Calu3 (cell line): ENCODE measurements at regions of chr6 and their contacts with region 1.

Region 1: GRCh38 chr6:168132531-168133167 is 53.6 kb upstream of the FRMD1 start:
- DNase-seq: peak; percentile 67
- H3K4me3 Mint-ChIP-seq: no peak overlapping the region
- H3K27ac Mint-ChIP-seq: no peak overlapping the region
- H3K4me1 Mint-ChIP-seq: no peaks in the 10 kb centered on the region
- H3K27me3 Mint-ChIP-seq: peaks cover 84% of the 10 kb centered on the region
- CTCF ChIP-seq: peak; percentile 42

Region 2: DNA sequence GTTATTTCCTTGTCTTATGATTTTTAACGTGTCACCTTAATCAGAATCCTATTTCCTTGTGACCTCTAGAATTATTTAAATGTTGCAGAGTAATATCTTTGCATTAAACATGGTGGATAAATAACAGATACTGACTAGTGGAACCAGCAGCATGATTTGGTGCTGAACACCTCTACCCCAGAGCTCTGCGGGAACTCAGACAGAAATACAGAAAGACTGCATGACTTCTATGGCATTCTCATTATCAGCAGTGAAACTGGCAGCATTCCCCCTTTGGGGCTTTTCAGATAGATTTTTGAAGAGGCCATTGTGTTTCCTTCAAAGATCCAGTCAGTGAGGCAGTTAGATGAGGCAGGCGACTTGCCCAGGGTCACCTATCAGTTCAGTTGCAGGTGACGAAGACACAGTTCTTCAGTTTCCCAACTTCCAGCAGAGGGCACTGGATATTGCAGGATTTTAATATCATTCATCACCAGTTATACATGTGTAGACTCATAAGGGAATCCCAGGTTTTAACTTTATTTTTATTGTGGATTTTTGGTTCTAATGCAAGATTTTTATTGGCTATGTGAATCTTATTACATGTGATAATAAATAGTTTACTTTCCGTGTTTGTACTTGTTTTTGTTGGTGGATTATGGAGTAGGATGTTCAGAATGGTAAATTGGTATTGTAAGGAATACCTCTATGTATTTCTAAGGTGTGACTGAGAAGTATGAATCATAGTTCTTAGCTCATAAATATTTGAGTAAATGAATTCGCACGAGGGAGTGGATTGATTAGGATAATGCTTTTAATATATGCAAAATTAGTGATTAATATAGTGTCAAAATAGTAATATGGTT is 224.6 kb before region 1 on chr6:
- CTCF ChIA-PET with region 1: interaction called, 4 read pairs
- intact Hi-C with region 1: loop called (anchors 5 kb)
- DNase-seq: peak; percentile 38
- H3K4me3 Mint-ChIP-seq: no peak overlapping the region
- H3K27ac Mint-ChIP-seq: peak overlapping the region; percentile 62
- H3K4me1 Mint-ChIP-seq: peaks cover 25% of the 10 kb centered on the region
- H3K27me3 Mint-ChIP-seq: no peaks in the 10 kb centered on the region
- CTCF ChIP-seq: peak; percentile 13

Region 3: DNA sequence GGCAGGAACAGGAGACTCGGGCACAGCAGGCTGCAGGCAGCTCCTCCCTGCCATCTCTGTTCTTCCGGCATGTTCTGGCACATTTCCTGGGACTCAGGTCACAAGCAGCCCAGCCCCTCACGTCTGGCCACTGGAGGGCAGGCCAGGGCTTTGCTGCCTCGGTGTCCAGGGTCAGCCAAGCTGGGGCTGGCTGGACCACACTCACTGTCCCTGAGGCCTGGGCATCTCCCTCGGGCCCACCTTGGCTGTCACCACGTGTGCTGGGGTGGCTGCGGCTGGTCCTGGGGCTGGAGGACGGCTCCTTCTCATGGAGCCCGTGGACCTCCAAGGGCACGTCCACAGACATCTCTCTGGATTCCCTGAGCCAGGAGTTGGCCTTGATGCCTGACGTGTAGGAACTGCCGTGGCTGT is 72.1 kb before region 1 on chr6:
- CTCF ChIA-PET with region 1: interaction called, 4 read pairs
- intact Hi-C with region 1: loop called (anchors 10 kb)
- DNase-seq: peak; percentile 63
- H3K4me3 Mint-ChIP-seq: no peak overlapping the region
- H3K27ac Mint-ChIP-seq: no peak overlapping the region
- H3K4me1 Mint-ChIP-seq: peaks cover 11% of the 10 kb centered on the region
- H3K27me3 Mint-ChIP-seq: peaks cover 51% of the 10 kb centered on the region
- CTCF ChIP-seq: no peak